ENCODE measurements at regions of chr14 and their contacts with region 1.

Region 1: DNA sequence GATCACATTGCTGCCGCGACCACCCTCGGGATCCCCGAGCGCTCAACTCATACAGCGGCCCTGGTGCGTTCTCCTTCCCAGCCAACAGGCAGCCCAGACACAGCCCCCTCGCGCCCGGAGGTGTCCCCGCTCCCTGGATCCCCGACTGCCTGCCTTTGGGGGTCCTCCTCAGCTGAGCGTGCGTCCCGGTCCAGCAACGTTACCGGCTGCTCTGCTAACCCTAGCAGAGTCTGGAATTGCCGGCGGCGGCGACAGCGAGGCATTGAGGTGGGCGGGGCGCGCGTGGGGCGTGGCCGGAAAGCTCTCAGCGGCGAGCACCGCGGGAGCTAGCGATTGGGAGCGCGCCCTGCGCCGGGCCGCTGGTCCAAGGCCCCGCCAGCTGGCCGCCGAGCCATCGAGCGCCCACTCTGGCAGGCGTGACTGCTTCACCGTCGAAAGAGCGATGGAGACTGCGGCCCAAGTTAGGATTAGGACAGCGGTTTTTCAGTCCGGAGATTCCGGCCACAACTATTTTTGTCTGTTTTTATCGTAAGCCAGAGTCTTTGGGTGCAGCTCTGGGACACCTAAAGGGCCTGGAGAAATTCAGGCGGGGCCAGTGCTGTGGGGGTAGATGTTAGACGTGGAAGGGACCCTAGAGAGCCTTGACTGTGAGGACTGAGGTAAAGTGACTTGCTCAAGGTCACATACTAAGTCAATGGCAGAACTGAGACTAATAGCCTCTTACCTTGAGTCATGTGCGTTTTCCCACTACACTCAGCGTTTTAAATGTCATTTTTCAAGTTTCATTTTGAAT is at the start of gene HEATR5A:
- DNase-seq: peak; percentile 98
- ATAC-seq: peak; percentile 90
- H3K4me3 ChIP-seq: peak within 1 kb of the TSS; percentile 73 to 99 (median 85)
- H3K27ac ChIP-seq: peak within 1 kb of the TSS; percentile 89
- H3K4me1 ChIP-seq: peaks cover 27% of the 10 kb centered on the region
- H3K27me3 ChIP-seq: no peaks in the 10 kb centered on the region; a peak in 1 of 5 replicates
- CTCF ChIP-seq: peak; percentile 76
- EP300 ChIP-seq: peak in 1 of 2 experiments; percentile 87; a peak in 1 of 4 replicates
- POLR2A ChIP-seq: peak in 1 of 2 experiments; percentile 99; a peak in 2 of 4 replicates
- RAD21 ChIP-seq: peak; percentile 74
- total RNA-seq, gene HEATR5A: 105 and 172 TPM in 2 replicates

Region 2: DNA sequence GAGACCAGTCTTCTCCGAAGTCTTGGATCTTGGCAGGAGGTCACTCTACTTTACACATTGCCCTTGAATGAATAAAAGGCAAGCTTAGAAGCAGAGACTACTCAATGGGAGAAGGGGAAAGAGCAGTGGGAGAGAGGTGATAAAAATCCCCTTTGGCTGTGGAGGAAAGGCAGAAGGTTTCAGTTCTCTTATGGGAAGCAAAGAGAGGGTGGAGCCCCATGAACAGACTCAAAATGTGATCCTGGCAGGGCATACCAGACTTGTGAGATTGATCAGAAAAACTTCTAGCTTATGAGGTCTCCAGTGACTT is 163.3 kb before region 1 on chr14:
- CTCF ChIA-PET with region 1: no interaction called
- POLR2A ChIA-PET with region 1: interaction called, 11 read pairs
- in situ Hi-C with region 1: no loop called
- intact Hi-C with region 1: no loop called
- DNase-seq: no peak
- ATAC-seq: no peak
- H3K4me3 ChIP-seq: no peak overlapping the region
- H3K27ac ChIP-seq: peak overlapping the region; percentile 89
- H3K4me1 ChIP-seq: peaks cover 96% of the 10 kb centered on the region
- H3K27me3 ChIP-seq: no peaks in the 10 kb centered on the region; a peak in 1 of 5 replicates
- CTCF ChIP-seq: no peak
- EP300 ChIP-seq: no peak
- POLR2A ChIP-seq: no peak
- RAD21 ChIP-seq: no peak

Region 3: DNA sequence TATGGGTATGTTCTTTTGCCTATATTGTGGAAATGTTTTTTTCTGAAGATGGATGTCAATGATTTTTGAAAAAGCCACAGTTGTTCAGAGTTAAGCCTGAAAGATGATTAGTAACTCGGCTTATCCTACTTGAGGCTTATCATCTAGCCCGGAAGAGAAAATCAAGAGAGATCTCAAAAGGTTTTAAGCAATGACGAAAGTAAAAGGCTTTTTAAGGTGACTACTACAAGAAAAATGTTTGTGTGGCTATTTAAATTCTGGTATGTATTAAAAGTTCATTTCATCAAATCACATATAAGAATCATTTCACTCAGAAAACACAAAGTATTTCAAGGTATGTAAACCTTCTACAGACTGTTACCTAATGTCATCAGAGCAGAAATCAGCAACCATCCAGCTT is 40.4 kb before region 1 on chr14:
- CTCF ChIA-PET with region 1: no interaction called
- POLR2A ChIA-PET with region 1: interaction called, 30 read pairs
- in situ Hi-C with region 1: no loop called
- intact Hi-C with region 1: loop called (anchors 1 kb)
- DNase-seq: no peak
- ATAC-seq: no peak
- H3K4me3 ChIP-seq: no peak overlapping the region
- H3K27ac ChIP-seq: no peak overlapping the region
- H3K4me1 ChIP-seq: peaks cover 26% of the 10 kb centered on the region
- H3K27me3 ChIP-seq: no peaks in the 10 kb centered on the region
- CTCF ChIP-seq: no peak
- EP300 ChIP-seq: no peak
- POLR2A ChIP-seq: no peak
- RAD21 ChIP-seq: no peak

Region 4: DNA sequence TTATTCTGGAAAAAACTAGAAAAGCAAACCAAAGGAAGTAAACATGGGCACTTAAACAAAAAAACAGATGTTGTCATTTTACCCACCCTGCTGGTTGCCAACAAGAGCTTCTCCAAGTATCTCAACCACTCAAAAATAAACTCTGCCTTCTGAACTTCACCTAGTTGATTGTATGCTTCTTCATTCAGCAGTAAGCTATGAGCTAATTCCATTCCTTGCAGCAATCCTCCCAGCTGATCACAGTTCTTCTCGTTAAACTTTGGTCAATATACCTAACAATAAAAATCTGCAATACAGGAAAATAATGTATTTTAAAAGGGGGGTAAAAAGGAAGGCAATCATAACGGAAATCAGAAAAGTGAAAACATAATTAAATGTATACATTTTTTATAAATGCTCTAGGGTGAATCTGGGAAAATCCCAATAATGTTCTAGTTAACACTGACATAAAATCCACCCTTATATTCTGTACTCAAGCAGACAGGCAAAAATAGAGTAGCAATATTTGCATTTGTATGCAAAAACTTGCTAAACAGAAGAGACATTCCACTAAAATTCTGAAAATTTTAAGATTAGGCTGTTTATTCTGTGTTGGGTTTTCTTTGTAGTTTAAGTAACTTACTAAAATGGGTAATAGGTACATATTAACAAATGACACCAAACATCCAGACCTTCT is 17.6 kb before region 1 on chr14:
- CTCF ChIA-PET with region 1: no interaction called
- POLR2A ChIA-PET with region 1: interaction called, 68 read pairs
- in situ Hi-C with region 1: no loop called
- intact Hi-C with region 1: no loop called
- DNase-seq: no peak
- ATAC-seq: no peak
- H3K4me3 ChIP-seq: no peak overlapping the region
- H3K27ac ChIP-seq: no peak overlapping the region
- H3K4me1 ChIP-seq: peaks cover 6% of the 10 kb centered on the region
- H3K27me3 ChIP-seq: no peaks in the 10 kb centered on the region
- CTCF ChIP-seq: no peak
- EP300 ChIP-seq: no peak
- POLR2A ChIP-seq: no peak
- RAD21 ChIP-seq: no peak

Region 5: GRCh38 chr14:31449971-31450610 is 29.6 kb after region 1 on chr14:
- CTCF ChIA-PET with region 1: interaction called, 4 read pairs
- POLR2A ChIA-PET with region 1: interaction called, 38 read pairs
- in situ Hi-C with region 1: loop called (anchors 5 kb)
- intact Hi-C with region 1: no loop called
- DNase-seq: peak; percentile 68
- ATAC-seq: peak; percentile 94
- H3K4me3 ChIP-seq: no peak overlapping the region
- H3K27ac ChIP-seq: no peak overlapping the region
- H3K4me1 ChIP-seq: no peaks in the 10 kb centered on the region
- H3K27me3 ChIP-seq: no peaks in the 10 kb centered on the region
- CTCF ChIP-seq: peak; percentile 75
- EP300 ChIP-seq: no peak
- POLR2A ChIP-seq: no peak
- RAD21 ChIP-seq: peak; percentile 74